ENCODE measurements at regions of chr13 and their contacts with region 1.

Region 1: GRCh38 chr13:29465741-29466293 is 129.7 kb downstream of the SLC7A1 start:
- DNase-seq: no peak
- H3K4me3 ChIP-seq: no peak overlapping the region
- H3K4me3 Mint-ChIP-seq: no peak overlapping the region
- H3K27ac Mint-ChIP-seq: no peak overlapping the region
- H3K4me1 ChIP-seq: no peaks in the 10 kb centered on the region
- H3K4me1 Mint-ChIP-seq: no peaks in the 10 kb centered on the region
- H3K27me3 ChIP-seq: no peaks in the 10 kb centered on the region
- H3K27me3 Mint-ChIP-seq: no peaks in the 10 kb centered on the region
- CTCF ChIP-seq: no peak

Region 2: GRCh38 chr13:29428310-29429181 is 37.3 kb before region 1 on chr13:
- CTCF ChIA-PET with region 1: no interaction called
- POLR2A ChIA-PET with region 1: no interaction called
- intact Hi-C with region 1: loop called (anchors 5 kb)
- DNase-seq: peak; percentile 51 to 66
- H3K4me3 ChIP-seq: peak overlapping the region; percentile 35
- H3K4me3 Mint-ChIP-seq: peak overlapping the region; percentile 86
- H3K27ac Mint-ChIP-seq: no peak overlapping the region
- H3K4me1 ChIP-seq: peaks cover 22% of the 10 kb centered on the region
- H3K4me1 Mint-ChIP-seq: peaks cover 17% of the 10 kb centered on the region
- H3K27me3 ChIP-seq: no peaks in the 10 kb centered on the region
- H3K27me3 Mint-ChIP-seq: no peaks in the 10 kb centered on the region
- CTCF ChIP-seq: peak in 1 of 2 experiments; percentile 28

Measured in Caco-2 (cell line).